T-cell (primary cell): ENCODE measurements at regions of chr12 and their contacts with region 1.

Region 1: GRCh38 chr12:25052196-25052913 is 103.5 kb upstream of the BCAT1 start:
- DNase-seq: peak; percentile 8 to 83 (median 52)
- ATAC-seq: peak; percentile 77 to 81 (median 81)
- H3K4me3 ChIP-seq: peak overlapping the region; percentile 70 to 86
- H3K4me3 Mint-ChIP-seq: peak overlapping the region; percentile 81 to 98 (median 97)
- H3K27ac ChIP-seq: peak overlapping the region; percentile 92
- H3K27ac Mint-ChIP-seq: peak overlapping the region; percentile 98 to 99
- H3K4me1 ChIP-seq: peaks cover 23 to 36% of the 10 kb centered on the region in 2 experiments
- H3K4me1 Mint-ChIP-seq: peaks cover 46 to 54% (median 47%) of the 10 kb centered on the region in 3 donors
- H3K27me3 ChIP-seq: no peaks in the 10 kb centered on the region
- H3K27me3 Mint-ChIP-seq: no peaks in the 10 kb centered on the region

Region 2: GRCh38 chr12:24902511-24903328 is 149.6 kb before region 1 on chr12:
- CTCF ChIA-PET with region 1: no interaction called
- POLR2A ChIA-PET with region 1: no interaction called
- DNase-seq: peak in 3 of 35 experiments; percentile 0 to 7 (median 6)
- ATAC-seq: peak in 3 of 4 experiments; percentile 17 to 48 (median 19)
- H3K4me3 ChIP-seq: peak overlapping the region; percentile 32 to 83
- H3K4me3 Mint-ChIP-seq: peak overlapping the region; percentile 77 to 85 (median 77)
- H3K27ac ChIP-seq: no peak overlapping the region
- H3K27ac Mint-ChIP-seq: peak overlapping the region in 1 of 2 donors; percentile 55
- H3K4me1 ChIP-seq: peaks cover 7 to 18% of the 10 kb centered on the region in 2 experiments
- H3K4me1 Mint-ChIP-seq: peaks cover 21 to 26% (median 23%) of the 10 kb centered on the region in 3 donors
- H3K27me3 ChIP-seq: peaks cover 0 to 18% of the 10 kb centered on the region in 2 experiments
- H3K27me3 Mint-ChIP-seq: peaks cover 19 to 21% of the 10 kb centered on the region in 2 donors

Region 3: GRCh38 chr12:24991209-24992049 is 60.9 kb before region 1 on chr12:
- CTCF ChIA-PET with region 1: interaction called, 5 to 16 read pairs
- POLR2A ChIA-PET with region 1: no interaction called
- DNase-seq: peak in 8 of 35 experiments; percentile 1 to 82 (median 15)
- ATAC-seq: peak; percentile 76 to 91 (median 84)
- H3K4me3 ChIP-seq: no peak overlapping the region
- H3K4me3 Mint-ChIP-seq: no peak overlapping the region
- H3K27ac ChIP-seq: no peak overlapping the region
- H3K27ac Mint-ChIP-seq: no peak overlapping the region
- H3K4me1 ChIP-seq: no peaks in the 10 kb centered on the region
- H3K4me1 Mint-ChIP-seq: peaks cover 0 to 3% (median 0%) of the 10 kb centered on the region in 3 donors
- H3K27me3 ChIP-seq: peaks cover 0 to 2% of the 10 kb centered on the region in 2 experiments
- H3K27me3 Mint-ChIP-seq: peaks cover 0 to 9% of the 10 kb centered on the region in 2 donors

Region 4: DNA sequence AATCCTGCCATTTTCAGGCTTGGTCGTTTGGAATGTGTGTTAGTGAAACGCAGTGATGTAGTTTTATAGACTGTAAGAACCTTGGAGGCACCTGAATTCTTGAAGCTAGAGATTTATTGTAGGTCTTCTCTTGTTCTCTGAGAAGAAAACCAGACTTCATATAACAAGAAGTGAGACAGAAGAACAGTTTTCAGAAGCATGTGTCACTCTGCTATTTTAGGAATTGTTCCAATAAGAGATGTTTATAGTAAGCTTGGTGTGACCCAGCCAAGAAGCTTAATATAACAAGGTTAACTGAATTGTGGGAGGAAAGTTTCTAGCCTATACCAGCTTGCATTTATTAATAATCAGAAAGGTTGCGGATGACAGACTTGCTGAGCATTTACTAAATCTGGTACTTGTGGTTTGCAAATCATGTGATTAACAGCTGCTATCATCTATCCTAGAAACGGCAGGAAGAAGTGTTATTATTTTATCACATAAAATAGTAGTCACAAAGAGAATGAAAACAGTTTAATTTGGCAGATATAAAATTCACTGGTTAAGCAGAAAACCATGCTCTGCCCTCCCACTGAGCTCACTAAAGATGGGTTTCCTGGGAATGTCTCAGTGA is 54.3 kb before region 1 on chr12:
- CTCF ChIA-PET with region 1: interaction called, 5 to 16 read pairs
- POLR2A ChIA-PET with region 1: no interaction called
- DNase-seq: peak in 1 of 35 experiments; percentile 24
- ATAC-seq: peak in 1 of 4 experiments; percentile 29
- H3K4me3 ChIP-seq: no peak overlapping the region
- H3K4me3 Mint-ChIP-seq: no peak overlapping the region
- H3K27ac ChIP-seq: no peak overlapping the region
- H3K27ac Mint-ChIP-seq: peak overlapping the region in 1 of 2 donors; percentile 11
- H3K4me1 ChIP-seq: peaks cover 0 to 3% of the 10 kb centered on the region in 2 experiments
- H3K4me1 Mint-ChIP-seq: peaks cover 12 to 22% (median 14%) of the 10 kb centered on the region in 3 donors
- H3K27me3 ChIP-seq: peaks cover 0 to 3% of the 10 kb centered on the region in 2 experiments
- H3K27me3 Mint-ChIP-seq: peaks cover 0 to 2% of the 10 kb centered on the region in 2 donors

Region 5: DNA sequence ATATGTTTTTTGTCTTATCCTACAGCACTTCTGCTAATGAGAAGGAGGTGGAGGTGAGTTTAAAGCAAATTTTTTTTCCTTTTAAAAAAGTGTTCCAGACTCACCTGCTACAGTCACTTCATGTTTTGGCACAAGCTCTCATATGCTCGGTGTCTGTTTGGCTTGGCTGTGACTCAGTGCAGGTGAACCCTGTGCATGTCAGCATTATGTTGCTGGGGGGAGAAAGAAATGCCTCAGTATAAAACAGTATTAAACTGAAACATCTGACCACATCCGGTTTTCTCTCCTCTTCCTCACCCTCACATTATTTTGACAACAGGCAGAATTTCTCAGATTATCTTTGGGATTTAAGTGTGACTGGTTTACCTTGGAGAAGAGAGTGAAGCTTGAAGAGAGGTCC is 37.4 kb after region 1 on chr12:
- CTCF ChIA-PET with region 1: interaction called in 1 of 2 experiments, 3 read pairs
- POLR2A ChIA-PET with region 1: interaction called in 1 of 2 experiments, 11 read pairs
- DNase-seq: no peak
- ATAC-seq: no peak
- H3K4me3 ChIP-seq: no peak overlapping the region
- H3K4me3 Mint-ChIP-seq: no peak overlapping the region
- H3K27ac ChIP-seq: peak overlapping the region; percentile 8
- H3K27ac Mint-ChIP-seq: peak overlapping the region; percentile 9 to 71
- H3K4me1 ChIP-seq: peaks cover 0 to 2% of the 10 kb centered on the region in 2 experiments
- H3K4me1 Mint-ChIP-seq: peaks cover 20 to 32% (median 28%) of the 10 kb centered on the region in 3 donors
- H3K27me3 ChIP-seq: no peaks in the 10 kb centered on the region
- H3K27me3 Mint-ChIP-seq: no peaks in the 10 kb centered on the region

Region 6: DNA sequence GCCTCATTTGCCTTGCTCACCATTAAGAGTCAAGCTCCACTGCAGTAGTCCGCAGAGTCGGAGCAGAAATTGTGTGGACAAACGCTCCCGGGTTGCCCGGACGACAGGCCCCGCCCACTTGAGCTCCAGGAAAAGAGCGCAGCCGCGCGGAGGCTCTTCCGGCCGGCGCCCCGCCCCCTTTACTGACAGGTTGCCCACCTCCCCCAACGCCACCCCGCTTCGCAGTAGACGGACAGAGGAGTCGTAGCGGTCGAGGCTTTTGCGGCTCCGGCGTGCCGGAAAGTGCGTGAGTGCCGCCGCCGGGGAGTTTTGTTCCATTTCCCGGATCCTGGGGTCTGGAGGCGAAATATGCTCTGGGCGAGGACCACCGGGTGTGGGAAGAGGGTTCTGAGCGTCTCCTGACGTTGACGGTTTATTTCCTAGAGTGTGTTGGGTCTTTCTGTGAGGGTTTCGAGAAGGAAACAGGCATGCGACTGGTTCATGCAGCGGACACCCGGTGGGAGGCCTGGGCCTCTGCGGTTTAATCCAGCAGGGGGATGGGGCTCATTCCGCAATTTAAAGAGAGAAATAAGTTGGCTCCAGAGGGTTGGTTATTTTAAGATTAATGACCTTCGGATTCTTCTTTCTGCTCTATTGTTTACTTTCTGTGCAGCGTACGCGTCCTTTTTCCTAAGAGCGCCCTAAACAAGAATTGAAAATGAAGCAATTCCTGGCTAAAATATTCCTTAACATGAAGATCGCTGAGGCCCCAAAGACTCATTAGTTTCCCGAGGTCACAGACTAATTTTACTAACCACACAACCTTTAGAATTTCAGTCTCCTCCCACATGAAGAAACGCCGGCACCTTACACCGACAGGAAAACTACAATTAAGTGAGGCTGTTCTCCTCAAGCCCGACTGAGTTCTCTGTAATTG is 143.0 kb after region 1 on chr12 and contains the starts of genes DNAI7 and ETFRF1:
- CTCF ChIA-PET with region 1: no interaction called
- POLR2A ChIA-PET with region 1: interaction called, 5 to 13 read pairs
- DNase-seq: peak; percentile 85 to 99 (median 96)
- ATAC-seq: peak; percentile 96 to 98 (median 96)
- H3K4me3 ChIP-seq: peak within 1 kb of the TSS; percentile 71 to 94
- H3K4me3 Mint-ChIP-seq: peak within 1 kb of the TSS; percentile 96 to 99 (median 99)
- H3K27ac ChIP-seq: peak within 1 kb of the TSS; percentile 92
- H3K27ac Mint-ChIP-seq: peak within 1 kb of the TSS; percentile 99
- H3K4me1 ChIP-seq: peaks cover 5 to 21% of the 10 kb centered on the region in 2 experiments
- H3K4me1 Mint-ChIP-seq: peaks cover 34 to 39% (median 37%) of the 10 kb centered on the region in 3 donors
- H3K27me3 ChIP-seq: no peaks in the 10 kb centered on the region
- H3K27me3 Mint-ChIP-seq: no peaks in the 10 kb centered on the region
- total RNA-seq, gene DNAI7: 0.16 to 0.90 (median 0.30) TPM in 3 of 5 donors, not detected in the others
- total RNA-seq, gene ETFRF1: 20.0 to 34.4 (median 22.1) TPM

Region 7: GRCh38 chr12:25364529-25365339 is 312.4 kb after region 1 on chr12:
- CTCF ChIA-PET with region 1: no interaction called
- POLR2A ChIA-PET with region 1: interaction called in 1 of 2 experiments, 11 read pairs
- DNase-seq: peak in 1 of 35 experiments; percentile 23
- ATAC-seq: peak in 1 of 4 experiments; percentile 72
- H3K4me3 ChIP-seq: no peak overlapping the region
- H3K4me3 Mint-ChIP-seq: peak overlapping the region in 2 of 3 donors; percentile 10 to 54
- H3K27ac ChIP-seq: no peak overlapping the region
- H3K27ac Mint-ChIP-seq: peak overlapping the region in 1 of 2 donors; percentile 11
- H3K4me1 ChIP-seq: peaks cover 4 to 11% of the 10 kb centered on the region in 2 experiments
- H3K4me1 Mint-ChIP-seq: peaks cover 13 to 16% (median 13%) of the 10 kb centered on the region in 3 donors
- H3K27me3 ChIP-seq: no peaks in the 10 kb centered on the region
- H3K27me3 Mint-ChIP-seq: no peaks in the 10 kb centered on the region

Region 8: GRCh38 chr12:25386831-25387731 is 334.7 kb after region 1 on chr12:
- CTCF ChIA-PET with region 1: interaction called in 1 of 2 experiments, 4 read pairs
- POLR2A ChIA-PET with region 1: interaction called in 1 of 2 experiments, 14 read pairs
- DNase-seq: peak; percentile 49 to 92 (median 70)
- ATAC-seq: peak in 3 of 4 experiments; percentile 7 to 10 (median 9)
- H3K4me3 ChIP-seq: peak overlapping the region; percentile 69 to 92
- H3K4me3 Mint-ChIP-seq: peak overlapping the region; percentile 94 to 98 (median 94)
- H3K27ac ChIP-seq: peak overlapping the region; percentile 98
- H3K27ac Mint-ChIP-seq: peak overlapping the region; percentile 99 to 100
- H3K4me1 ChIP-seq: peaks cover 19 to 36% of the 10 kb centered on the region in 2 experiments
- H3K4me1 Mint-ChIP-seq: peaks cover 40 to 58% (median 53%) of the 10 kb centered on the region in 3 donors
- H3K27me3 ChIP-seq: no peaks in the 10 kb centered on the region
- H3K27me3 Mint-ChIP-seq: no peaks in the 10 kb centered on the region